Ovary (tissue), 10 donors: ENCODE measurements at regions of chr18 and their contacts with region 1.

Region 1: DNA sequence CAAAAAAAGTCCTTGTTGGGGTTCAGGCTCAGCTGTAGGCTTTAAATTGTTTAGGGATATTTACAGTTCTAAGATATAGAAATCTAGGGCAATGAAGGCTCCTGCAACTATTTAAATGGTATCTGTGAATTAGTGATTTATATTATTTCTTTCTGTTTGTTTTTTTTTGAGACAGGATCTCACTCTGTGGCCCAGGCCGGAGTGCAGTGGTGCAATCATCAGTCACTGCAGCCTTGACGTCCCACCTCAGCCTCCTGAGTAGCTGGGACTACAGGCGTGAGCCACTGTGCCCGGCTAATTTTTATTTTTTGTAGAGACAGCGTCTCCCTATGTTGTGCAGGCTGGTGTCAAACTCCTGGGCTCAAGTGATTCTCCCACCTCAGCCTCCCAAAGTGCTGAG is 32.3 kb upstream of the NDUFV2 start:
- DNase-seq: no peak
- H3K4me3 ChIP-seq: no peak overlapping the region
- H3K27ac ChIP-seq: no peak overlapping the region
- H3K4me1 ChIP-seq: no peaks in the 10 kb centered on the region
- H3K27me3 ChIP-seq: no peaks in the 10 kb centered on the region
- CTCF ChIP-seq: no peak
- EP300 ChIP-seq: no peak
- POLR2A ChIP-seq: no peak

Region 2: DNA sequence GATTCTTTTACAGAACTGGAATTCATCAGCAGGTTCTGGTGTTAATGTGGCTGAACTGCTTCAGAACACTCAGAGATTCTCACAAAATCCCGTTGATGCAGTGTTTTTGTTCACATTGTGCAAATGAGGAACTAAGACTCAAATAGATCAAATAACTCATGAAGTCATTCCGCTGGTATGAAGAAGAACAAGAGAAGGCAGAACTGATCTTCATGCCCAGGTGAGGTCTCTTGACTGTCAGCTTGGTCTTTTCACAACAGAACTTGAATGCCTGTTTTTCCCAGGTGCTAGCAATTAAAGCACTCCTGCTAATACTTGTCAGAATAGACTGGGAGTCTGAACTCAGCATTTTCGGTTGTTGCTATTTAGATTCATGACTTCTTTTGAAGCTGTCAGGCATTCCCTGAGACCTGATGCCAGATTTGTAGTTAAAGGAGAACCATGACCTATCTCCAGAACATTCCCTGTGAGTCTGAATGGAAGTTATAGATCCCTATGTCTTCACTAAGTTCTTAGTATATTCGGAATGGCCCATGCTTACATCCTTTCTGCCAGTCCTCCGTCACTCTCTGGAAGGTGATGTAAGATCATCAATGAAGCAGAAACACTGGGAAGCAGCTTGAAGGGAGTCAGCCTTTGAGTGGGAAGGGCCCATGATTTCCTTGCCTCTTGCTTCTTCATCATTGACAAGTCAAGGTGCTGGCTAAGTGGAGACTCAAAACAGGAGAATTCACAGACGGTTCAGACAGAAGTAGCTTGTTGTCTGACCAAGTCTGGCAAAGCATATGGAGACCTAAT is 209.2 kb before region 1 on chr18:
- intact Hi-C with region 1: no loop called
- DNase-seq: no peak
- H3K4me3 ChIP-seq: no peak overlapping the region
- H3K27ac ChIP-seq: no peak overlapping the region
- H3K4me1 ChIP-seq: no peaks in the 10 kb centered on the region
- H3K27me3 ChIP-seq: no peaks in the 10 kb centered on the region
- CTCF ChIP-seq: no peak
- EP300 ChIP-seq: no peak
- POLR2A ChIP-seq: no peak

Region 3: GRCh38 chr18:9147440-9148202 is 77.4 kb after region 1 on chr18:
- intact Hi-C with region 1: loop called in 3 of 4 experiments (anchors 5 to 10 kb)
- DNase-seq: peak in 1 of 5 donors; percentile 42
- H3K4me3 ChIP-seq: no peak overlapping the region
- H3K27ac ChIP-seq: no peak overlapping the region
- H3K4me1 ChIP-seq: peaks cover 3% of the 10 kb centered on the region
- H3K27me3 ChIP-seq: no peaks in the 10 kb centered on the region
- CTCF ChIP-seq: peak; percentile 28 to 71 (median 65)
- EP300 ChIP-seq: no peak
- POLR2A ChIP-seq: no peak